PC-9 (cell line): ENCODE measurements at regions of chr1 and their contacts with region 1.

Region 1: DNA sequence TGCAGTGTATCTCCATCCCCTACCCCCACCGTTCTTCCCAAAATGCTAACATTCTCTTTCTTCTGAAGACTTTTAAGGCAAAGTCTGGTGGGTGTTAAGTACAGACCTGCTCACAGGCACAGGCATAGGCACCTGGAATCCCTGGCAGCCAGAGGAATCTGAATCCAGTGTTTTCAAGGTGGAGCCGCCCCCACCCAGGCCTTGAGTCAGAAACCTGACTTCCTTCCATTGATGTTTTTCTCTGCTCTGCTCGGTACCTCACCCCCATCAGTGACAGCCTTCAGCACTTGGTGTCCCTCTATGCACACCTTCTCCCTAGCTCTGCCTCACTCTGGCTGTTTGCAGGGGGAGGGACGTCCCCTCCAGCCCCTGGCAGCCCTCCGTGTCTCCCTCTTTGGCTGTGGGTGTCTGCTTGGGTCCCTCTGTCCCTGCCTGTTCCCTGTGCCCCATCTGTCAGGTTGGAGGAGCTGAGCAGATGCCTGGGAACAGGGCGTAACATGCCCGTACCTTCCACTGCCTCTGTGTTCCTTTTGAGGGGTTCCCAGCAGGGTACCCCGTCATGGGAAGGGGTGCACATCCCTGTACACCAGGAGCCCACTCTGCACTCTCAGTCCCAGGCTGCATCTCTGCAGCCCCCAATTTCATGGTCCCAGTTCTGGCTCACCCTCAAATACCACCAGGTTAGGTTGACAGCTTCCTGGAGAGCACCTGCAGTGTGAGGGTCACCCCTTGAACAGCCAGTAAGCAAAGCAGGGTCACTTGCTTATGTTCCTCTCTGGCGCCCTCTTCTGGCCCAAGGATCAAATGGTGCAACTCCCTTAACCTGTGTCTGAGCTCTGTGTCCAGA is 6.7 kb downstream of the NCDN start:
- DNase-seq: peak; percentile 69 to 79
- H3K4me3 ChIP-seq: no peak overlapping the region
- H3K27ac ChIP-seq: no peak overlapping the region
- H3K4me1 ChIP-seq: no peaks in the 10 kb centered on the region
- H3K27me3 ChIP-seq: no peaks in the 10 kb centered on the region
- CTCF ChIP-seq: peak; percentile 83

Region 2: GRCh38 chr1:35451125-35451528 is 113.1 kb before region 1 on chr1:
- CTCF ChIA-PET with region 1: interaction called, 22 read pairs
- POLR2A ChIA-PET with region 1: no interaction called
- intact Hi-C with region 1: loop called (anchors 1 kb)
- DNase-seq: peak; percentile 47 to 72
- H3K4me3 ChIP-seq: no peak overlapping the region
- H3K27ac ChIP-seq: no peak overlapping the region
- H3K4me1 ChIP-seq: peaks cover 19% of the 10 kb centered on the region
- H3K27me3 ChIP-seq: no peaks in the 10 kb centered on the region
- CTCF ChIP-seq: peak; percentile 89

Region 3: DNA sequence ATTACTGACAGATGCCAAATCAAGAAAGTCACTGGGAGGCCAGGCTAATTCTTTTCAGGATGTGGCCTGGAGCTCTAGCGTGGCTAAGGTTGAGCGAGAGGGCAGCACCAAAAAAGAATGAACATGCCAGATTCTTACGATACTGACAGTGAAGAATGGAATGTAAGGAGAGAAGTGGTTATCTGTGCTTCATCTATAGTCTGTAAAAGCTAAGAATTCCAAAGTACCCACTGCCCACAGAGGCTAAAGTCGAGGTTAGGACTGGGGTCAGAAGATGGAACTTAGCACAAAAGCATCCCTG is 41.6 kb after region 1 on chr1:
- CTCF ChIA-PET with region 1: no interaction called
- POLR2A ChIA-PET with region 1: no interaction called
- intact Hi-C with region 1: no loop called
- DNase-seq: peak in 1 of 2 experiments; percentile 30
- H3K4me3 ChIP-seq: no peak overlapping the region
- H3K27ac ChIP-seq: no peak overlapping the region
- H3K4me1 ChIP-seq: no peaks in the 10 kb centered on the region
- H3K27me3 ChIP-seq: no peaks in the 10 kb centered on the region
- CTCF ChIP-seq: no peak

Region 4: GRCh38 chr1:35715568-35716002 is 151.3 kb after region 1 on chr1:
- CTCF ChIA-PET with region 1: interaction called, 16 read pairs
- POLR2A ChIA-PET with region 1: no interaction called
- intact Hi-C with region 1: no loop called
- DNase-seq: peak; percentile 41 to 61
- H3K4me3 ChIP-seq: no peak overlapping the region
- H3K27ac ChIP-seq: no peak overlapping the region
- H3K4me1 ChIP-seq: no peaks in the 10 kb centered on the region
- H3K27me3 ChIP-seq: no peaks in the 10 kb centered on the region
- CTCF ChIP-seq: peak; percentile 87

Region 5: GRCh38 chr1:35726450-35727433 is 162.5 kb after region 1 on chr1:
- CTCF ChIA-PET with region 1: interaction called, 14 read pairs
- POLR2A ChIA-PET with region 1: no interaction called
- intact Hi-C with region 1: loop called (anchors 1 kb)
- DNase-seq: peak; percentile 42 to 46
- H3K4me3 ChIP-seq: no peak overlapping the region
- H3K27ac ChIP-seq: no peak overlapping the region
- H3K4me1 ChIP-seq: no peaks in the 10 kb centered on the region
- H3K27me3 ChIP-seq: no peaks in the 10 kb centered on the region
- CTCF ChIP-seq: peak; percentile 84

Region 6: GRCh38 chr1:35777109-35777508 is 212.8 kb after region 1 on chr1:
- CTCF ChIA-PET with region 1: interaction called, 3 read pairs
- POLR2A ChIA-PET with region 1: no interaction called
- intact Hi-C with region 1: loop called (anchors 1 kb)
- DNase-seq: no peak
- H3K4me3 ChIP-seq: no peak overlapping the region
- H3K27ac ChIP-seq: no peak overlapping the region
- H3K4me1 ChIP-seq: no peaks in the 10 kb centered on the region
- H3K27me3 ChIP-seq: no peaks in the 10 kb centered on the region
- CTCF ChIP-seq: no peak

Region 7: DNA sequence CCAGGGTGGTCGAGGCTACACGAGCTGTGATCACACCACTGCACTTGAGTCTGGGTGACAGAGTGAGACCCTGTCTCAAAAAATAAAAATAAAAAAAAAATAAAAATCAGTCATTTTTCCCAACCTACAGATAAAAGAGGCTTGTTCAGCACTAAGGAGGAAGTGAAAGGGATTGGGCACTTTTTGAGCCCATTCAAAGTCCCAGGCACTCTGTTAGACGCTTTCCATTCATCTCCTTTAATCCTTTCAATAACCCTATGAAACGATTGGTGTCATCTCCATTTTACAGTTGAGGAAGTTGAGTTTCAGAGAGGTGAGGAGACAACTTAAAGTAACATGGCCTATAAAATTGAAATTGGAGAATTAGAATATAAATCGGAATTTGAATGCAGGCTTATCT is 233.1 kb after region 1 on chr1:
- CTCF ChIA-PET with region 1: no interaction called
- POLR2A ChIA-PET with region 1: no interaction called
- intact Hi-C with region 1: no loop called
- DNase-seq: no peak
- H3K4me3 ChIP-seq: no peak overlapping the region
- H3K27ac ChIP-seq: no peak overlapping the region
- H3K4me1 ChIP-seq: no peaks in the 10 kb centered on the region
- H3K27me3 ChIP-seq: no peaks in the 10 kb centered on the region
- CTCF ChIP-seq: no peak

Region 8: DNA sequence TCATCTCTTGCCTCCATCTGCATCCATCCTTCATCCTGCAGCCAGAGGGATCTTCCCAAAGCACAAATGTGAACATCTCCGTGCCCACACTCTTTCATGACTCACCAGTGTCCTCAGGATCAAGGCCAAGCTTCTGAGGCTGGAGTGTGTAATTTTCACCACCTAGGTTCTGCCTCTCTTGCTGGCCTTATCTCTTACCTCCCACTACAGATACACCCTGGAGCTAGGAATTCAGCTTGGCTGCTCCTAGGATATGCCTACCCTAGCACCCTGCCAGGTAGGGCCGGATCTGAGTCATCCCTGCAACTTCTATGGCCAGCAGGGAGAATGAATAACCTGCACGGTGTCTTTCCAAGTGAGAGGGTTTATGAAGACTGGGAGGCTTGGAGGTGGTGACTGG is 1127.1 kb after region 1 on chr1:
- CTCF ChIA-PET with region 1: no interaction called
- POLR2A ChIA-PET with region 1: no interaction called
- intact Hi-C with region 1: no loop called
- DNase-seq: peak; percentile 12 to 86
- H3K4me3 ChIP-seq: no peak overlapping the region
- H3K27ac ChIP-seq: no peak overlapping the region
- H3K4me1 ChIP-seq: peaks cover 15% of the 10 kb centered on the region; the same call in 1 of the 2 replicates
- H3K27me3 ChIP-seq: peaks cover 54% of the 10 kb centered on the region
- CTCF ChIP-seq: no peak